H1 (cell line): ENCODE measurements at regions of chr22 and their contacts with region 1.

Region 1: GRCh38 chr22:41237707-41238569 is 2.8 kb downstream of the CHADL start:
- DNase-seq: peak in 1 of 2 experiments; percentile 80
- H3K4me3 ChIP-seq: peak overlapping the region; percentile 2 to 53 (median 28); a peak in 7 of 8 replicates
- H3K27ac ChIP-seq: peak overlapping the region; percentile 37; the same call in 1 of the 2 replicates
- H3K4me1 ChIP-seq: peaks cover 4 to 17% (median 11%) of the 10 kb centered on the region in 4 experiments; a peak in 6 of 7 replicates
- H3K27me3 ChIP-seq: peaks cover 0 to 4% (median 0%) of the 10 kb centered on the region in 4 experiments; a peak in 3 of 7 replicates
- CTCF ChIP-seq: peak; percentile 76 to 85 (median 83)
- EP300 ChIP-seq: no peak
- POLR2A ChIP-seq: peak in 1 of 2 experiments; percentile 49; a peak in 1 of 3 replicates
- RAD21 ChIP-seq: peak; percentile 78 to 86

Region 2: GRCh38 chr22:40922484-40923303 is 315.2 kb before region 1 on chr22:
- CTCF ChIA-PET with region 1: interaction called, 10 read pairs
- POLR2A ChIA-PET with region 1: interaction called, 4 read pairs
- DNase-seq: no peak
- H3K4me3 ChIP-seq: no peak overlapping the region
- H3K27ac ChIP-seq: no peak overlapping the region
- H3K4me1 ChIP-seq: no peaks in the 10 kb centered on the region
- H3K27me3 ChIP-seq: no peaks in the 10 kb centered on the region
- CTCF ChIP-seq: peak in 2 of 3 experiments; percentile 23 to 56; a peak in 2 of 4 replicates
- EP300 ChIP-seq: no peak
- POLR2A ChIP-seq: no peak
- RAD21 ChIP-seq: peak; percentile 66 to 68

Region 3: DNA sequence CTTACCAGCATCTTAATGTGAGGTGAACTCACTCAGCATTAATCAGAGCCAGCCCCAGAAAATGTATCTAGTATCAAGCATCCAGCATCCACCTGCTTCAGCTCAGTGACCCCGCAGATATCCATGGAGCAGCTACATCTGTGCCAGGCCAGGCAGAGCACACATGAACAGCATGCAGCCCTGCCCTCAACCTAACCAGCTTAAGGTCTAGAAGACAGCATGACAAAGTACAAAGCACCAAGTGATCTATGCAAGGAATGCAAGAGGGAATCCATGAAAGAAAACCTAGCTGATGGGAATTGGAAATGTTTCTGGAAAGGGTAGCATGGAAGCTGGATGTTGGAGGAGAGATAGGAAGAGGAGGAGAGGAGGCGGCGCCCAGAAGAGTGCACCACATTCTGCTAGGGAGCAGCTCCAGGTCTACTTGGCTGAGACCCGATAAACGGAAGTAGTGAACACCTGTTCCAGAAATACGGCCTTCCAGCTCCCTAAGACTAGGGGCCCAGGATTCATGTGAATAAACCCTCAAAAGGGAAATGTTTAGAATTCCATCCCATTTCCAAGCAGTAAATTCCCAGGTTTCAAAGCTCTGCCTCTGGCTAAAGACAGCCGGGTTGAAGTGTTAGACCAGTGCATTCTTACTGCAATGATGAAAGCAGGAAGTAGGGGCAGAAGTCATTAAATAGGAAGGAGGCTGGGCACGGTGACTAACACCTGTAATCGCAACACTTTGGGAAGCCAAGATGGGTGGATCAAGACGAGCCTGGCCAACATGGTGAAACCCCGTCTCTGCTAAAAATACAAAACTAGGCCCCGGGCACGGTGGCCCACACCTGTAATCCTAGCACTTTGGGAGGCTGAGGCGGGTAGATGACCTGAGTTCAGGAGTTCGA is 56.3 kb before region 1 on chr22:
- CTCF ChIA-PET with region 1: interaction called, 14 read pairs
- POLR2A ChIA-PET with region 1: interaction called, 15 read pairs
- DNase-seq: no peak
- H3K4me3 ChIP-seq: no peak overlapping the region
- H3K27ac ChIP-seq: no peak overlapping the region
- H3K4me1 ChIP-seq: peaks cover 0 to 5% (median 4%) of the 10 kb centered on the region in 4 experiments; a peak in 5 of 7 replicates
- H3K27me3 ChIP-seq: no peaks in the 10 kb centered on the region
- CTCF ChIP-seq: no peak
- EP300 ChIP-seq: no peak
- POLR2A ChIP-seq: 0 out of 3 replicates have a peak, but pooled peaks of 1 of the 2 experiments have one; percentile 23
- RAD21 ChIP-seq: no peak

Region 4: GRCh38 chr22:41191467-41191866 is 46.5 kb before region 1 on chr22:
- CTCF ChIA-PET with region 1: interaction called, 10 read pairs
- POLR2A ChIA-PET with region 1: interaction called, 3 read pairs
- DNase-seq: no peak
- H3K4me3 ChIP-seq: no peak overlapping the region
- H3K27ac ChIP-seq: no peak overlapping the region
- H3K4me1 ChIP-seq: no peaks in the 10 kb centered on the region
- H3K27me3 ChIP-seq: peaks cover 0 to 1% (median under 1%) of the 10 kb centered on the region in 4 experiments; a peak in 6 of 7 replicates
- CTCF ChIP-seq: no peak
- EP300 ChIP-seq: no peak
- POLR2A ChIP-seq: no peak
- RAD21 ChIP-seq: no peak

Region 5: DNA sequence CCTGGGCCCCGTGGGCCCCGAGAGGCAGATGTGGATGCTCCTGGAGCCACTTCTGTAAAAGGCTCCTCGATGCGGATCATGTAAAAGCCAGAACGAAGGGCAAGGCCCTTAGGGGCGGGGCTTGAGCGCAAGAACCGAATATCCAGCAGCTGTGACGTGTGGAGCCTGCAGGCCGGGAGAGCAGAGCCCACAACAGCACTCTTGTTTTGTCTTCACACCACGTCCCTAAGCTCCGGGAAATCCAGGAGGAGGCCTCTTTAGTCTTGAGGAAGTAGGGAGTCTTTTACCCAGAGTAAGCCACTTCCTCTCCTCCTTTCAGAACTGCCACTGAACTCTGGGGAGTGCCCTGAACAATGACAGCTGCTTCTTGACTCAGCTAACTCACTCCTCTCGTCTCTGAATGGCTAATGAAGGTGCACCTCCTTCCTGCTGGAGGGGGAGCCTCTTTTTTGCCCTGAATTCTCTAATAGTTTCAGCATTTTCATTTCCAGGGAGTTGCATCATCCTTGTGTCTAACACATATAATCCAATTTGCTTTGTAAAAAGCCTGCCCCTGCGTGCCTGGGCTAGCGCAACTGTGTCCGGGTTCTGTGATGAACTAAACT is 20.3 kb before region 1 on chr22:
- CTCF ChIA-PET with region 1: interaction called, 11 read pairs
- POLR2A ChIA-PET with region 1: interaction called, 11 read pairs
- DNase-seq: peak in 1 of 2 experiments; percentile 64
- H3K4me3 ChIP-seq: no peak overlapping the region
- H3K27ac ChIP-seq: 0 out of 2 replicates have a peak overlapping the region, but pooled peaks have one; percentile 9
- H3K4me1 ChIP-seq: peaks cover 0 to 12% (median 6%) of the 10 kb centered on the region in 4 experiments; a peak in 6 of 7 replicates
- H3K27me3 ChIP-seq: no peaks in the 10 kb centered on the region
- CTCF ChIP-seq: no peak
- EP300 ChIP-seq: no peak
- POLR2A ChIP-seq: no peak
- RAD21 ChIP-seq: no peak

Region 6: GRCh38 chr22:41226723-41227655 is 10.9 kb before region 1 on chr22:
- CTCF ChIA-PET with region 1: interaction called, 10 read pairs
- POLR2A ChIA-PET with region 1: interaction called, 25 read pairs
- DNase-seq: no peak
- H3K4me3 ChIP-seq: no peak overlapping the region
- H3K27ac ChIP-seq: no peak overlapping the region
- H3K4me1 ChIP-seq: no peaks in the 10 kb centered on the region
- H3K27me3 ChIP-seq: peaks cover 0 to 2% (median 0%) of the 10 kb centered on the region in 4 experiments; a peak in 1 of 7 replicates
- CTCF ChIP-seq: no peak
- EP300 ChIP-seq: no peak
- POLR2A ChIP-seq: no peak
- RAD21 ChIP-seq: no peak

Region 7: DNA sequence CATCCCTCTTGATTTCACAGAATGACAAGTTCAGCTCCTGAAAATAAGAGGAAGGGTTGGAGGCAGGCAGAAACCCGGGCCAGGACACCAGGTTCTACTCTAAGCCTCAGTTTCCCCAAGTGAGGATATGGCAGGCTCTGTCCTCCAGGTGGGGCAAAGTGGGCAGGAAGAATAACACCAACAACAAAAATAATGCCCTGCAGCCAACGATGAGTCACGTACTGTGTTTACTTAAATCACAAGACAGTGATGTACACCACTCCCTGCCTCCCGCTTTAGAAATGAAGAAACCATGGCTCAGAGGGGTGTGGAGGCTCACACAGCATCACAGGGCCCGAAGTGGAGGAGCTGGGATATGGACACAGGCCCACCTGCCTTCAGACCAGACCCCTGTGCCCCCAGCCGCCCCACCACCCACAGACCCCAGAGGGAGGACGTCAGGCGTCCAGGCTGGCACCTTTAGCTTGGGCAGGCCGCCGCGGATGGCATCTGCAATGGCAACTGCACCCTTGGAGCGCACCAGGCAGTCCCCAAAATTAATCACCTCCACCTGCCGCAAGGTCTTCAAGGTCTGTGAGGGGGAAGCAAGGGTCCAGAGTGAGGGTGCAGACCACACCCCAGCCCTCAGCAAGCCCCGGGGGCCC is 18.4 kb after region 1 on chr22:
- CTCF ChIA-PET with region 1: interaction called, 11 read pairs
- POLR2A ChIA-PET with region 1: interaction called, 23 read pairs
- DNase-seq: no peak
- H3K4me3 ChIP-seq: no peak overlapping the region
- H3K27ac ChIP-seq: no peak overlapping the region; the same call in 1 of the 2 replicates
- H3K4me1 ChIP-seq: peaks cover 0 to 4% (median under 1%) of the 10 kb centered on the region in 4 experiments; a peak in 2 of 7 replicates
- H3K27me3 ChIP-seq: no peaks in the 10 kb centered on the region
- CTCF ChIP-seq: no peak
- EP300 ChIP-seq: no peak
- POLR2A ChIP-seq: no peak
- RAD21 ChIP-seq: no peak